HepG2 (cell line): ENCODE measurements at regions of chr7 and their contacts with region 1.

Region 1: GRCh38 chr7:21767300-21767900 is 178.3 kb downstream of the CDCA7L start:
- DNase-seq: peak; percentile 84
- ATAC-seq: peak; percentile 100
- H3K4me3 ChIP-seq: no peak overlapping the region
- H3K27ac ChIP-seq: no peak overlapping the region
- H3K4me1 ChIP-seq: no peaks in the 10 kb centered on the region
- H3K27me3 ChIP-seq: no peaks in the 10 kb centered on the region
- CTCF ChIP-seq: peak; percentile 89
- EP300 ChIP-seq: no peak
- POLR2A ChIP-seq: no peak
- RAD21 ChIP-seq: peak; percentile 81

Region 2: DNA sequence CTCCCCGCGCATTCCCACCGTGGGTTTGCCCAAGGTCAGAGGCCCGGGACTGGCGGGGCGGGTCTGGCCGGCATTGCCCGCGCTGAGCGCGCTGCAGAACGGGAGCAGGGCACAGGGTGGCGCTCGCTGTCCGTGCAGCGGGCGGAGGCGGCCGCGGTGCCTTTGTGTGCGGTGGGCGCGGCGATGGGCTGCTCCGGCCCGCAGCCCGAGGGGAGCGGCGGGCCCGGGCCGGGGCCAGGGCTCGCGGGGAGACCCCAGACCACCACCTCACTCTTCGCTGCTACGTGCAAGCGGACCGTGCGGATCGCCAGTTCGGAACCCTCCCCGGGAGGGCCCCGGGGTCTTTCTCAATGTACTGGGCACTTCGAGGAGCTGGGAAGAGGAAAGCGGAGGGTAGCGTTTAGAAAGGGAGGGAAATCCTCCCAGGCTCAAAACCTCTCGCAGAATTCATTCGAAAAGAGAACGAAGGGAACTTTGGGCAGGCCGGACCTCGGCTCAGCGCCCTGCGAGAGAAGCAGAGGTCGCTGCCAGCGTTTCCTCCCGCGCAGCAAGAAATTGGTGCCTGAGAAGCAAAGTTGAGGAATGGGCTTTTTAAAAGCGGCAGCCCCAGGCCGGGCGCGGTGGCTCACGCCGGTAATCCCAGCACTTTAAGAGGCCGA is 989.2 kb before region 1 on chr7:
- CTCF ChIA-PET with region 1: no interaction called
- POLR2A ChIA-PET with region 1: no interaction called
- in situ Hi-C with region 1: loop called (anchors 10 kb)
- intact Hi-C with region 1: loop called (anchors 5 kb)
- DNase-seq: no peak
- ATAC-seq: peak; percentile 100
- H3K4me3 ChIP-seq: peak overlapping the region; percentile 32 to 60 (median 48); a peak in 5 of 6 replicates
- H3K27ac ChIP-seq: no peak overlapping the region
- H3K4me1 ChIP-seq: peaks cover 5% of the 10 kb centered on the region; the same call in 1 of the 2 replicates
- H3K27me3 ChIP-seq: peaks cover 2 to 12% of the 10 kb centered on the region in 2 experiments; a peak in 3 of 5 replicates
- CTCF ChIP-seq: peak; percentile 85
- EP300 ChIP-seq: no peak
- POLR2A ChIP-seq: no peak
- RAD21 ChIP-seq: peak; percentile 95

Region 3: DNA sequence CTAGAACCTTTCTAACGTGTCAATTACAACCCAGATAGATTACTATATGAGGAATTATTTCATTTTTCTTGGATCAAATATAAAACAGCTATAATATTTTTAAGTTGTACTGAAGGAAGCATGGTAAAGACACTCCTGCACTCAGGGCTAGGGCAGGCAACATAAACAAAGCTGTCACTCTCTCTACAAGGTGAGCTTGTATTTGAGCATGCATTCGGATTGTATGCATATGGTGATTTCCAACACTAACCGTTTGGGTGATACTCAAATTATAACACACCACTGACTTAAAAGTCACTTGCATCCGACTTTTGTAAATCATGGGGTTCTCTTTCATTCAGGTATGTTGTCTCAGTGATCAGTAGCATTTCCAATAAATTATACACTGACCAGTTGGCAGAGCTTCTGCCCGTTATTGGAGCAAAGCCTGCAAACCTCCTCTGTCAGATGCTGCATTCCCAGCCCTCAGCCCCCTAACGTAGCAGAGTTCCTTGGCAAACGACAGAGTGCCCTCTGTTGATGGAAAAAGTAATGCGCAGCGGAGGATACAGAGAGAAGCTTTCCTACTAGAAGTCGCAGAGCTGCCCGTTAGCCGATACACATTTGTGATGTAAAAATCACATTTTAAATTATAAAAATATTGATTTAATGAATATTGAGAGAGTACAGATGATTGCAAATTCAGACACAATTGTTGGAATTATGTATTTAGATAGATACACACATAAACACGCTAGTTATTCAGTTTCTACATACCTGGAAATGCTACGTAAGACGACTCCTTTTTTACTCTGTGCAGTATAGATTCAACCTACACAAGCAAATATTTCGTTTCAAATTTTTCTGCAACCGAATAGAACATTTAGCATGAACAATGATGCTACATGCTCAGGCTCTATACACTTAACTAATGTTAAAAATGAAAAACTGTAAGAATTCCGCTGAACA is 513.4 kb before region 1 on chr7:
- CTCF ChIA-PET with region 1: interaction called, 8 read pairs
- POLR2A ChIA-PET with region 1: no interaction called
- in situ Hi-C with region 1: loop called (anchors 5 kb)
- intact Hi-C with region 1: loop called (anchors 1 kb)
- DNase-seq: peak; percentile 48
- ATAC-seq: peak; percentile 98
- H3K4me3 ChIP-seq: no peak overlapping the region
- H3K27ac ChIP-seq: no peak overlapping the region
- H3K4me1 ChIP-seq: peaks cover 5% of the 10 kb centered on the region; the same call in 1 of the 2 replicates
- H3K27me3 ChIP-seq: peaks cover 0 to 11% of the 10 kb centered on the region in 2 experiments; a peak in 1 of 5 replicates
- CTCF ChIP-seq: peak; percentile 81
- EP300 ChIP-seq: no peak
- POLR2A ChIP-seq: no peak
- RAD21 ChIP-seq: 0 out of 2 replicates have a peak, but pooled peaks have one; percentile 51

Region 4: DNA sequence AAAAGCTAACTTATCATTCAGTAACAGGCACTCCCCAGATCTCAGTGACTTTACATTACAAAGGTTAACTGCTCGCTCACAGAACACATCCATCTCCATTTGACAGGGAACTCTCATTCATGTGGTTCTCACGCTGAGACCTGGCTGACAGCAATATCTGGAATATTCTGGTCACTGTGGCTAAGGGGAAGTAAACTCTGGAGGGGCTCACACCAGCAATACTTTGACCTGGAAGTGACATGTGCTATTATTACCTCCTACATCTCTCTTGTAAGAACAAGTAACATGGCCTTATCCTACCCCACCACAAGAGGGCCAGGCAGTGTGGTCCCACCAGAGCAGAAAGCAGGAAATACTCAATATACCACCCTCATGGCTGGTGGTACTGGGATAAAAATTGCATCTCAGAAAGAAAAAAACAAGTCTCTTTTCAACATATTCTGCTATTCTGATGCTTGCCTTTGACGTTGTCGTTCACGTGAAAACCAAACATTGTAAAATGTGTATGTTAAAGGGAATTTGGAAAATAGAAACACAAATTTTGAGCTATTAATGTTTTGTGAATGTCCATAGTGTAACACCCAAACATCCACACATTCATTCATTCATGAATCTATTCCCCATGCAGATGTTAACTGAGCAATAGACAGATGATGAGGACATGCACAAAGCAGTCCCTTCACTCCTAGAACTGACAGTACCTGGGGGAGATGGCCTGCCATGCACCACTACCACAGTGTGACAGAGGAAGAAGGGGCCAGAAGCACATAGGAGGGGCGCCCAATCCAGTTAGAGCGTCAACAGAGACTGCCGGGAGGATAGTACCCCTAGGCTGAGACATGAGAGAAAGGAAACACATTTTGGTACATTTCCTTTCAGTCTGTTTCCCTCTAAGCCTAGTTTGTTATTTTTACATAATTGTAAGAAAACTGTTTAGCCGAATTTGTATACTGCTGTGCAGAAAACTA is 505.5 kb before region 1 on chr7:
- CTCF ChIA-PET with region 1: interaction called, 8 read pairs
- POLR2A ChIA-PET with region 1: no interaction called
- in situ Hi-C with region 1: loop called (anchors 5 kb)
- intact Hi-C with region 1: loop called (anchors 1 kb)
- DNase-seq: peak; percentile 32
- ATAC-seq: peak; percentile 96
- H3K4me3 ChIP-seq: no peak overlapping the region
- H3K27ac ChIP-seq: no peak overlapping the region
- H3K4me1 ChIP-seq: no peaks in the 10 kb centered on the region
- H3K27me3 ChIP-seq: no peaks in the 10 kb centered on the region
- CTCF ChIP-seq: peak; percentile 64
- EP300 ChIP-seq: no peak
- POLR2A ChIP-seq: no peak
- RAD21 ChIP-seq: peak; percentile 43; the same call in 1 of the 2 replicates

Region 5: DNA sequence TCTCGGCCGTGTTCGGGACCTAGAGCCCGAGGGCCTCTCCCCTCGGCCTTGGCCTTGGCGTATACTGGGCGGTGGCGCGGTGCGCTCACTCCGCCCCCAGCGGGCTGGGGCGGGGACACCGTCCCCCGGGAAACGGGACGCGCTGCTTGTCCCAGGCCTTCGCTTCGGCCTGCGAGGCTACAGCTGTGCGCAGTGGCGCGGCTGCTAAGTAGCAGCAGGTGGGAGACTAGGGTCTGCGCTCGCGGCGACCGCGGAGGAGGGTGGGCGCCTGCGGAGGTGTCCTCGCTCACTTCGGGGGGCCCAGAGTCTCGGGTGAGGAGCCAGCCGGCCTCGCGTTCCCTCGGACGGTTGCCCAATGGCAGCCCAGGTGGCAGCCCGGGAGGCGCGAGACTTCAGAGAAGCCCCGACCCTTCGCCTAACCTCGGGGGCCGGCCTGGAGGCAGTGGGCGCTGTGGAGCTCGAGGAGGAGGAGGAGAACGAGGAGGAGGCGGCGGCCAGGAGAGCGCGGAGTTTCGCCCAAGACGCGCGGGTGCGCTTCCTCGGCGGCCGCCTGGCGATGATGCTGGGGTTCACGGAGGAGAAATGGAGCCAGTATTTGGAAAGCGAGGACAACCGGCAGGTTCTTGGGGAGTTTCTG is 224.4 kb before region 1 on chr7 and contains the start of gene DNAH11:
- CTCF ChIA-PET with region 1: no interaction called
- POLR2A ChIA-PET with region 1: no interaction called
- in situ Hi-C with region 1: loop called (anchors 25 kb)
- intact Hi-C with region 1: no loop called
- DNase-seq: no peak
- ATAC-seq: peak; percentile 94
- H3K4me3 ChIP-seq: peak within 1 kb of the TSS in 1 of 3 experiments; percentile 30; a peak in 1 of 6 replicates
- H3K27ac ChIP-seq: no peak within 1 kb of the TSS
- H3K4me1 ChIP-seq: no peaks in the 10 kb centered on the region
- H3K27me3 ChIP-seq: peaks cover 0 to 28% of the 10 kb centered on the region in 2 experiments; a peak in 3 of 5 replicates
- CTCF ChIP-seq: no peak
- EP300 ChIP-seq: no peak
- POLR2A ChIP-seq: no peak
- RAD21 ChIP-seq: no peak
- total RNA-seq, gene DNAH11: 0.01 TPM in 1 of 2 replicates, not detected in the other

Region 6: DNA sequence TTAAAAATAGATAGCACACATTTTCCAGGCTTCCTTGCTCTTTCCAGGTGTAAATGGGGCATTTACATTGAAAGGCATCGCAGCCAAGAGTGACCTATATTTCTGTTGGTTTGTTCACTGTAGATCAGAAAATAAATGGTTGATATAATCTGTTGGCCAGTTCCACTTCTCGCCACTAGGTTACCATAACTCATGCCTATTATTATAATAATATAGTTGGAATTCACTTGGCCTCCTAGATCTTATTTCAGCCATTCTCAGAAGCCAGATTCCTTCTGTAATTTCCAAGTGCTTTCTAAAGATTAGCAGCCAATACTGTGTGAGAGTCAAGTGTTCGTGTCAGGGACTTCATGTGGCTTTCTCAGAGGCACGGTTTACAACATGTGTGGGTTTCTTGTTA is 45.0 kb before region 1 on chr7:
- CTCF ChIA-PET with region 1: no interaction called
- POLR2A ChIA-PET with region 1: no interaction called
- in situ Hi-C with region 1: no loop called
- intact Hi-C with region 1: no loop called
- DNase-seq: no peak
- ATAC-seq: no peak
- H3K4me3 ChIP-seq: no peak overlapping the region
- H3K27ac ChIP-seq: no peak overlapping the region
- H3K4me1 ChIP-seq: no peaks in the 10 kb centered on the region
- H3K27me3 ChIP-seq: no peaks in the 10 kb centered on the region
- CTCF ChIP-seq: no peak
- EP300 ChIP-seq: no peak
- POLR2A ChIP-seq: no peak
- RAD21 ChIP-seq: no peak